PC-9 (cell line): ENCODE measurements at regions of chr2 and their contacts with region 1.

Region 1: DNA sequence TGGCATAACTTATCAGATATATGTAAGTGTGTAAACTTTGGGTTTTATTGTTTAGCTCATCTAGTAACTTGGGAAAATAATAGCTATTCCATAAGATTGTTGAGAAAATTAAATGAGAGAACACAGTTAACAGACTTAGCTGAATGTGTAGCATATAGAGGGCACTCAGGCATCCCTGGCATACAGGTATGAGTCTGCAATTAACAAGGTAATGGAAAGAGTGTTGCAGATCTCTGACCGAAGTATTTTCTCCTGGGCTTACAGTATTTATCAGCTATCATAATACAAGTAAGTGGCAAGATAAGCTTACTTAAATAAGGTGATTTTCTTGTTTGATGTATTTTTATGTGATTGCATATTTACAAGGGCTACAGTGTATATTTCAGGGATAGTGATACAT is 7.9 kb upstream of the COBLL1 start:
- DNase-seq: no peak
- H3K4me3 ChIP-seq: no peak overlapping the region
- H3K27ac ChIP-seq: no peak overlapping the region
- H3K4me1 ChIP-seq: no peaks in the 10 kb centered on the region
- H3K27me3 ChIP-seq: no peaks in the 10 kb centered on the region
- CTCF ChIP-seq: no peak

Region 2: DNA sequence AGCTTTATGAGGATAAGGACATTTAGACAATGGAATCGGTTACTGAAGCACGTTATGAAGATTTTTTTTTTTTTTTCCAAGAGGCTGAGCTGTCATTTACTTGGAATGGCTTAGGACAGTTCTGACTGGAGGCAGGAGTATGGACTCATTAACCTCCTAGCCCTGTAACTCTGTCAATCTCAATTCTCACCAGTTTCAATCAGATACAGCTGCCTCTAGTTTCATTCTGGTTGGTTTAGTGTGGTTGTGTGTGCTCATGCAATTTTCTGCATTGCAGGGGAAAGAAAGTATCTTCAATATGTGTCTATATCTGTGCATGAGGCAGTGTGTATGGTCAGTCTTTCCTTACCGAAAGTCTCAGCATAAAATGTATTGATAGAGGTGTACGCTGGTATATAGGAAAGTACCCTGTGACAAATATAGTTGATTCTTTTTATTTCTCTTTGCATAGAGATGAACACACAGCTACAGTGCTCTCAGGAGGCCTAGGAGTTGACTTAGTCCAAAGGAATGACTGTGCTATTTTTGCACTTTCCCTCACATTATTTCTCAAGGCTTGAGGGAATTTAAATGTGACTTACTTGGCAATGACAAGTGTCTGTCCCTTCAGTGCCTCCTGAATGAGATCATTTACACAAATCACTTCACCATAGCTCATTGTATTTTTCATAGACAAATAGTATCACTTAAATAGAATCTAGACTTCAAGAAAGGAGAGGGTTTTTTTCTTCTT is 177.7 kb before region 1 on chr2:
- CTCF ChIA-PET with region 1: no interaction called
- POLR2A ChIA-PET with region 1: no interaction called
- intact Hi-C with region 1: no loop called
- DNase-seq: no peak
- H3K4me3 ChIP-seq: no peak overlapping the region
- H3K27ac ChIP-seq: no peak overlapping the region
- H3K4me1 ChIP-seq: no peaks in the 10 kb centered on the region
- H3K27me3 ChIP-seq: no peaks in the 10 kb centered on the region
- CTCF ChIP-seq: no peak

Region 3: GRCh38 chr2:164808776-164809175 is 40.7 kb before region 1 on chr2:
- CTCF ChIA-PET with region 1: no interaction called
- POLR2A ChIA-PET with region 1: interaction called, 11 read pairs
- intact Hi-C with region 1: no loop called
- DNase-seq: no peak
- H3K4me3 ChIP-seq: no peak overlapping the region
- H3K27ac ChIP-seq: no peak overlapping the region
- H3K4me1 ChIP-seq: no peaks in the 10 kb centered on the region
- H3K27me3 ChIP-seq: no peaks in the 10 kb centered on the region
- CTCF ChIP-seq: no peak